Activated naive CD4-positive, alpha-beta T cell treated with anti-CD3 and anti-CD28 coated beads for 36 hours (primary cell): ENCODE measurements at regions of chrX and their contacts with region 1.

Region 1: GRCh38 chrX:53422086-53422860 is at the start of gene SMC1A:
- DNase-seq: peak; percentile 97
- H3K4me3 Mint-ChIP-seq: peak within 1 kb of the TSS; percentile 88
- H3K27ac Mint-ChIP-seq: peak within 1 kb of the TSS; percentile 97
- H3K4me1 Mint-ChIP-seq: peaks cover 30% of the 10 kb centered on the region
- H3K27me3 Mint-ChIP-seq: no peaks in the 10 kb centered on the region
- total RNA-seq, gene SMC1A: 169 to 170 TPM

Region 2: GRCh38 chrX:52811065-52811625 is 611.1 kb before region 1 on chrX and contains the start of gene XAGE5:
- CTCF ChIA-PET with region 1: no interaction called
- intact Hi-C with region 1: no loop called
- DNase-seq: no peak
- H3K4me3 Mint-ChIP-seq: no peak within 1 kb of the TSS
- H3K27ac Mint-ChIP-seq: no peak within 1 kb of the TSS
- H3K4me1 Mint-ChIP-seq: no peaks in the 10 kb centered on the region
- H3K27me3 Mint-ChIP-seq: no peaks in the 10 kb centered on the region
- total RNA-seq, gene XAGE5: not detected

Region 3: DNA sequence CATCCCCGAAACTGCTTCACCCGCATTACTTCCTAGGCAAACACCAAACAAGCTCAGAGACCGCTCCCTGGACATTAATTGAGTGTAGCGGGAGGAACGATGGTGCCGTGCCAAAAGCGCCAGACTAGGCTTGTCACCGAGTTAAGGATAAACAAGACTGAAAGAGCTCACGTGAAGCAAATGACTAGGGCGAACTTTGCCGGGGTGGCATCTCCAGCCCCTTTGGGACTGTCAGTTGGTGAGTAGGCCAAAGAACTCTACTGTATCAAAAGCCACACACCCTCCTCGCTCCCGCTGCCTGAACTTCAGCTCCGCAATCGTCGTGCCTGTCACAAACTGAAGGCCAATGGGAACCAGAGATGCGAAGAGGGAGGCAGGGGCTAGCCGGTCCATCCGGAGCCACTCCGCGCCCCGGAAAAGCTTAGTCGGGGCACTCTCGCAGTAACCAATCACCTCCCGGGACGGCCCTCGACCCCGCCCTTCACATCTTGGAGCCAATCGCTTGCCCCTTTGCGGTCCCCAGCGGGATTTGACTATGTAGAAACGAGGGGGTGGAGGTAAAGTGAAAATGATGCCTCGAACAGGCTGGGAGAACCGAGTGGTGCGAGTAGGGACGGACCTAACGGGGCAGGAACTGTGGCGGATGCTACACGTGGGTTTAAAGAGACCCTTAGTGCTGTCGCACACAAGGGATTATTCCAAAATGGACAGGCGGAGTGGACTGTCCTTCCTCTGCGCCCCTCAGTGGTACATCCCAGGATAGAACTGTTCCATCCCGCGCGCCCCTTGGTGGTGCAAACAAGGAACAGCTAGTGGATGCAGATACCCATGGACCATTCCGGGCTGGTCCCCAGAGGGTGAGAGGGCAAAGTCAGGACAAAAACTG is 426.9 kb before region 1 on chrX:
- CTCF ChIA-PET with region 1: no interaction called
- intact Hi-C with region 1: loop called (anchors 5 kb)
- DNase-seq: peak; percentile 95
- H3K4me3 Mint-ChIP-seq: peak overlapping the region; percentile 96
- H3K27ac Mint-ChIP-seq: peak overlapping the region; percentile 100
- H3K4me1 Mint-ChIP-seq: peaks cover 20% of the 10 kb centered on the region
- H3K27me3 Mint-ChIP-seq: no peaks in the 10 kb centered on the region

Region 4: GRCh38 chrX:53224860-53225797 is 197.1 kb before region 1 on chrX and contains the start of gene KDM5C:
- CTCF ChIA-PET with region 1: no interaction called
- intact Hi-C with region 1: loop called (anchors 2 kb)
- DNase-seq: peak; percentile 89
- H3K4me3 Mint-ChIP-seq: peak within 1 kb of the TSS; percentile 91
- H3K27ac Mint-ChIP-seq: peak within 1 kb of the TSS; percentile 95
- H3K4me1 Mint-ChIP-seq: peaks cover 32% of the 10 kb centered on the region
- H3K27me3 Mint-ChIP-seq: no peaks in the 10 kb centered on the region
- total RNA-seq, gene KDM5C: 67.4 to 68.2 TPM

Region 5: GRCh38 chrX:53256446-53257041 is 165.7 kb before region 1 on chrX:
- CTCF ChIA-PET with region 1: no interaction called
- intact Hi-C with region 1: no loop called
- DNase-seq: no peak
- H3K4me3 Mint-ChIP-seq: no peak overlapping the region
- H3K27ac Mint-ChIP-seq: no peak overlapping the region
- H3K4me1 Mint-ChIP-seq: peaks cover 3% of the 10 kb centered on the region
- H3K27me3 Mint-ChIP-seq: no peaks in the 10 kb centered on the region

Region 6: DNA sequence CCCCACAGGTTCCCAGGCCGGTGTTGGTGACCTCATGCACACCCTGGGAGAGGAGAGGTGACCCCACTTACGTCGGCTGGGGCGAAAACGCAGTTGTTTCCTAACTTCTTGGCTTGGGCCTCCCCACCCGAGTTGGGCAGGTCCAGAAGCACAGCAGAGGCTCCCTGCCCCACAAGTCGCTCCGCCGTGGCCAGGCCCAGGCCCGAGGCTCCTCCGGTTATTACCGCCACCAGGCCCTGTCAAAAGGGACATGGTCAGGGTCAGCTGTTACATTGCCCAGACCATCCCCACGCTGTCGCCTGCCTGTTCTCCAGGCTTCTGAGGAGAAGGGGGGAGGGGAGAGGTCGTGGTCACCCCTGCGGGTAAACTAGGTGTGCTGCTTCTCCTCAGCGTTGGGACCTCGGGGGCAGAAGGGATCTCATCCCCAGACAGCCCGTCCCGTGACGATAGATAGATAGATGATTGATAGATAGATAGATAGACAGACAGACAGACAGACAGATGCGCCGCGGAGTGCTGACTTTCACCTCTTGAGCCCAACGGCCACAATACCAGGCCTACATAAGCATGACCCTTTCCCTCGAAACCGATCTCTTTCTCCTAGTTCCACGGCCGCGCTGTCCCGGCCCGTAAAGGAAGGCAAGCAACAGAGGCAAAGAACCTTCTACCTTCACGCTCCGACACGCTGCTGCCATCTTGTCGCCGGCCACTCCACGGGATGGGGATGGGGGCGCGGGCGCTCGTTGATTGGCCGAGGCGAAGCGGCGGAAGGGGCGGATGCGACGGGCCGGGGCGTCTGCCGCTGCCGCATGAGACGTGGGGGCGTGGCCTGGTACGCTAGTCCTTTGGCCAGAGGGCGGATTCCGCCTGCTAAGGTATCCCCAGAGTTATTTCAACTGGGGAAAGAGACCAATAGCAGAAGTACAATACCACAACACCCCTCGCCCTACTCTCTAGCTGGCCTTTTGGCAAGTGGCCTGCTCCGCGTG is 11.7 kb after region 1 on chrX and contains the start of gene HSD17B10:
- CTCF ChIA-PET with region 1: interaction called, 6 read pairs
- intact Hi-C with region 1: loop called (anchors 1 kb)
- DNase-seq: peak; percentile 88
- H3K4me3 Mint-ChIP-seq: peak within 1 kb of the TSS; percentile 85
- H3K27ac Mint-ChIP-seq: peak within 1 kb of the TSS; percentile 76
- H3K4me1 Mint-ChIP-seq: peaks cover 28% of the 10 kb centered on the region
- H3K27me3 Mint-ChIP-seq: no peaks in the 10 kb centered on the region
- total RNA-seq, gene HSD17B10: 69.2 to 75.2 TPM